ENCODE measurements at regions of chr1 and their contacts with region 1.

Region 1: DNA sequence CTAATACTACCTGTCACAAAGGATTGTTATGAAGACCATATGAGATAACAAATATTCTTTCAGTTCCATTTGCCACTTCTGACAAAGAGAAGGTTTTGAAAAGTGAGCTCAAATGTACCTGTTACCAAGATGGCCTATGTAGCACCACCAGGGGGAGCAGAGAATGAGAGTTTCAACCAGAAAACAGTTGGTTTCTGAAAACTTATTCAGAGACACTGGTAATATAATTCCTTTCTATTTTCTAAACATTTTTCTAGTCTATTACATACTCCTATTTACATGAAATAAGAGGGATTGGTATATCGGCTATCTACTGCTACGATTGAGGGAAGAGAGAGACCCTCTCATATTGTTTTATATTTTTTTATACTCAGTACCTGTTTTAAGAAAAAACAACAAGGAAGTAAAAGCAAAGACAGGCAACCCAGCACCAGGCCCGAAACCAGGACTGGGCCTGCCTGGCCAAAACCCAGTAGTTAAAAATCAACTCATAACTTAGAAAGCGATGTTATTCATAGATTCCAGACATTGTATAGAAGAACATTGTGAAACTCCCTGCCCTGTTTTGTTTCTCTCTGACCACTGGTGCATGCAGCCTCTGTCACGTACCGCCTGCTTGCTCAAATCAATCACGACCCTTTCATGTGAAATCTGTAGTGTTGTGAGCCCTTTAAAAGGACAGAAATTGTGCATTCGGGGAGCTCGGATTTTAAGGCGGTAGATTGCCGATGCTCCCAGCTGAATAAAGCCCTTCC is 48.3 kb downstream of the IL23R start:
- DNase-seq: peak; percentile 41 to 53 (median 45)
- H3K4me3 ChIP-seq: no peak overlapping the region
- H3K4me3 Mint-ChIP-seq: no peak overlapping the region
- H3K27ac ChIP-seq: no peak overlapping the region
- H3K27ac Mint-ChIP-seq: peak overlapping the region in 1 of 7 donors; percentile 0
- H3K4me1 ChIP-seq: peaks cover 14% of the 10 kb centered on the region
- H3K4me1 Mint-ChIP-seq: peaks cover 10 to 18% (median 14%) of the 10 kb centered on the region in 4 donors
- H3K27me3 ChIP-seq: no peaks in the 10 kb centered on the region
- H3K27me3 Mint-ChIP-seq: no peaks in the 10 kb centered on the region

Region 2: GRCh38 chr1:66043186-66043585 is 1171.4 kb before region 1 on chr1:
- CTCF ChIA-PET with region 1: no interaction called
- POLR2A ChIA-PET with region 1: no interaction called
- intact Hi-C with region 1: no loop called
- DNase-seq: no peak
- H3K4me3 ChIP-seq: no peak overlapping the region
- H3K4me3 Mint-ChIP-seq: no peak overlapping the region
- H3K27ac ChIP-seq: no peak overlapping the region
- H3K27ac Mint-ChIP-seq: no peak overlapping the region
- H3K4me1 ChIP-seq: no peaks in the 10 kb centered on the region
- H3K4me1 Mint-ChIP-seq: no peaks in the 10 kb centered on the region
- H3K27me3 ChIP-seq: no peaks in the 10 kb centered on the region
- H3K27me3 Mint-ChIP-seq: peaks cover 10 to 12% of the 10 kb centered on the region in 2 donors

Region 3: GRCh38 chr1:67053785-67054772 is 160.5 kb before region 1 on chr1 and contains the start of gene SLC35D1:
- CTCF ChIA-PET with region 1: no interaction called
- POLR2A ChIA-PET with region 1: interaction called, 5 read pairs
- intact Hi-C with region 1: loop called (anchors 2 kb)
- DNase-seq: peak; percentile 68 to 82 (median 77)
- H3K4me3 ChIP-seq: peak within 1 kb of the TSS; percentile 73 to 88
- H3K4me3 Mint-ChIP-seq: peak within 1 kb of the TSS; percentile 93 to 96 (median 95)
- H3K27ac ChIP-seq: peak within 1 kb of the TSS; percentile 91
- H3K27ac Mint-ChIP-seq: peak within 1 kb of the TSS; percentile 66 to 98 (median 97)
- H3K4me1 ChIP-seq: peaks cover 25% of the 10 kb centered on the region
- H3K4me1 Mint-ChIP-seq: peaks cover 21 to 38% (median 28%) of the 10 kb centered on the region in 4 donors
- H3K27me3 ChIP-seq: no peaks in the 10 kb centered on the region
- H3K27me3 Mint-ChIP-seq: no peaks in the 10 kb centered on the region
- total RNA-seq, gene SLC35D1: 16.9 to 17.7 TPM

Region 4: GRCh38 chr1:67162957-67163356 is 51.6 kb before region 1 on chr1:
- CTCF ChIA-PET with region 1: interaction called, 58 read pairs
- POLR2A ChIA-PET with region 1: no interaction called
- intact Hi-C with region 1: no loop called
- DNase-seq: peak in 1 of 5 donors; percentile 52
- H3K4me3 ChIP-seq: no peak overlapping the region
- H3K4me3 Mint-ChIP-seq: peak overlapping the region in 1 of 8 donors; percentile 47
- H3K27ac ChIP-seq: no peak overlapping the region
- H3K27ac Mint-ChIP-seq: peak overlapping the region in 3 of 7 donors; percentile 38 to 82 (median 53)
- H3K4me1 ChIP-seq: no peaks in the 10 kb centered on the region
- H3K4me1 Mint-ChIP-seq: peaks cover 12 to 32% (median 15%) of the 10 kb centered on the region in 4 donors
- H3K27me3 ChIP-seq: peaks cover 4% of the 10 kb centered on the region
- H3K27me3 Mint-ChIP-seq: peaks cover 0 to 4% of the 10 kb centered on the region in 2 donors

Region 5: GRCh38 chr1:67201891-67202290 is 12.7 kb before region 1 on chr1:
- CTCF ChIA-PET with region 1: interaction called, 21 read pairs
- POLR2A ChIA-PET with region 1: no interaction called
- intact Hi-C with region 1: no loop called
- DNase-seq: no peak
- H3K4me3 ChIP-seq: no peak overlapping the region
- H3K4me3 Mint-ChIP-seq: no peak overlapping the region
- H3K27ac ChIP-seq: no peak overlapping the region
- H3K27ac Mint-ChIP-seq: no peak overlapping the region
- H3K4me1 ChIP-seq: no peaks in the 10 kb centered on the region
- H3K4me1 Mint-ChIP-seq: peaks cover 0 to 3% (median under 1%) of the 10 kb centered on the region in 4 donors
- H3K27me3 ChIP-seq: no peaks in the 10 kb centered on the region
- H3K27me3 Mint-ChIP-seq: peaks cover 0 to 1% of the 10 kb centered on the region in 2 donors

Region 6: DNA sequence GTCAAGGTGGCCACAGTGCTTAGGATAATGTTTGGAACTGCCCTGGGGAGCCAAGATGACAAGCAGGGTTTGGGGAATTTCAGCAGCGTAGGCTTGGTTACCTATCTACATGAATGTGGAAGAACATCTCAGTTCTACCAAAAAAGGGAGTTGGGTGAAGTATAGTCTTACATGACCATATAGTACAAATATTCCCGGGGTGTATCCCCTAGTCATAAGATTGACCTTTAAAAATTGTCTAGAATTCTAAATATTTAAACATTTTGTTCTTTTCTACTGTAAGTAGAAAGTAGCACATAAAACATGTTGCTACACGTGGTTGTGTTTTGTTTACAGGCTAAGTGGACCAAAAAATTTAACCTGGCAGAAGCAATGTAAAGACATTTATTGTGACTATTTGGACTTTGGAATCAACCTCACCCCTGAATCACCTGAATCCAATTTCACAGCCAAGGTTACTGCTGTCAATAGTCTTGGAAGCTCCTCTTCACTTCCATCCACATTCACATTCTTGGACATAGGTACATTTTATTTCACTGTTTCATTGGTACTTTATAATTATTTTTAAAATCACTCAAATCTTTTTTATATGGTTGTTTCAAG is 113.4 kb after region 1 on chr1:
- CTCF ChIA-PET with region 1: no interaction called
- POLR2A ChIA-PET with region 1: no interaction called
- intact Hi-C with region 1: no loop called
- DNase-seq: no peak
- H3K4me3 ChIP-seq: no peak overlapping the region
- H3K4me3 Mint-ChIP-seq: no peak overlapping the region
- H3K27ac ChIP-seq: no peak overlapping the region
- H3K27ac Mint-ChIP-seq: no peak overlapping the region
- H3K4me1 ChIP-seq: peaks cover 6% of the 10 kb centered on the region
- H3K4me1 Mint-ChIP-seq: peaks cover 2 to 4% (median 3%) of the 10 kb centered on the region in 4 donors
- H3K27me3 ChIP-seq: no peaks in the 10 kb centered on the region
- H3K27me3 Mint-ChIP-seq: no peaks in the 10 kb centered on the region

Region 7: DNA sequence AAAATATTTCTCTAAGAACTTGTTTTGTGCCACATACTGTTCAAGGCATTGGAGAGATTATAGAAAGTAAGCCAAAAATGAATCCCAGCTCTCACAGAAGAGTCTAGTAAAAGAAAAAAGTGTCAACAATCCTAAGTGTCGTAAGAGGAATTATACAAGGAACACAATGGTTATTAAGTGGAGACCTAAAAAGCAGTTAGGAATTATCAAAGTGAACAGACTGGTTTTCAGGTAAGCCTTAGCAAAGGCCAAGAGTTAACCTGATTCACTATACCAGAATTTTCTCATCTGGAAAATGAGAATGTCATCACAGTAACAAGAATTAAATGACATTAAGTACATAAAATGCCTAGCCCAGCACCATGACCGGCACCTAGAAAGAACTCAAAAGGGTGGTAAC is 200.0 kb after region 1 on chr1:
- CTCF ChIA-PET with region 1: no interaction called
- POLR2A ChIA-PET with region 1: no interaction called
- intact Hi-C with region 1: no loop called
- DNase-seq: no peak
- H3K4me3 ChIP-seq: no peak overlapping the region
- H3K4me3 Mint-ChIP-seq: no peak overlapping the region
- H3K27ac ChIP-seq: no peak overlapping the region
- H3K27ac Mint-ChIP-seq: peak overlapping the region in 3 of 7 donors; percentile 17 to 71 (median 17)
- H3K4me1 ChIP-seq: peaks cover 18% of the 10 kb centered on the region
- H3K4me1 Mint-ChIP-seq: peaks cover 15 to 40% (median 25%) of the 10 kb centered on the region in 4 donors
- H3K27me3 ChIP-seq: no peaks in the 10 kb centered on the region
- H3K27me3 Mint-ChIP-seq: no peaks in the 10 kb centered on the region

Region 8: GRCh38 chr1:67489643-67490042 is 275.0 kb after region 1 on chr1:
- CTCF ChIA-PET with region 1: interaction called, 44 read pairs
- POLR2A ChIA-PET with region 1: no interaction called
- intact Hi-C with region 1: no loop called
- DNase-seq: peak in 1 of 5 donors; percentile 9
- H3K4me3 ChIP-seq: no peak overlapping the region
- H3K4me3 Mint-ChIP-seq: no peak overlapping the region
- H3K27ac ChIP-seq: no peak overlapping the region
- H3K27ac Mint-ChIP-seq: no peak overlapping the region
- H3K4me1 ChIP-seq: no peaks in the 10 kb centered on the region
- H3K4me1 Mint-ChIP-seq: no peaks in the 10 kb centered on the region
- H3K27me3 ChIP-seq: no peaks in the 10 kb centered on the region
- H3K27me3 Mint-ChIP-seq: no peaks in the 10 kb centered on the region